ENCODE measurements at regions of chr1 and their contacts with region 1.

Region 1: DNA sequence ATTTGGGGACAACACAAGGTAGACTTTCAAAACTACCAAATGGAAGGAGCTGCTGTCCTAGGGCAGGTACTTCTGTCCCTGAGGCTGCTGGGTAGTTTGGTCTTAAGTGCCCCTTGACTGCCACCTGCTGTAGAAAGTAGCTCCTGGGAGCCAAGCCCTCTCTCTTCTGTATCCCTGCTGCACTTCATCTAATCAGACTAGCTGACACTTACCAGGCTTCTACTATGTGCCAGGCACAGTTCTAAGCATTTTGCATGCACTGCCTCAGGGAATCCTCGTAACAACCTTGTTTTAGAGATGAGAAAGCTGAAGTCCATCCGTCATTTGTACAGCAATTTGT is 15.9 kb upstream of the SRSF4 start:
- DNase-seq: peak; percentile 36
- H3K4me3 ChIP-seq: no peak overlapping the region
- H3K27ac ChIP-seq: no peak overlapping the region
- H3K4me1 ChIP-seq: peaks cover 26% of the 10 kb centered on the region
- H3K27me3 ChIP-seq: no peaks in the 10 kb centered on the region
- CTCF ChIP-seq: peak; percentile 66 to 71

Region 2: GRCh38 chr1:29105839-29106238 is 91.7 kb before region 1 on chr1:
- CTCF ChIA-PET with region 1: no interaction called
- dilution Hi-C with region 1: loop called (anchors 5 kb)
- in situ Hi-C with region 1: no loop called
- intact Hi-C with region 1: no loop called
- DNase-seq: no peak
- H3K4me3 ChIP-seq: no peak overlapping the region
- H3K27ac ChIP-seq: no peak overlapping the region
- H3K4me1 ChIP-seq: no peaks in the 10 kb centered on the region
- H3K27me3 ChIP-seq: no peaks in the 10 kb centered on the region
- CTCF ChIP-seq: no peak

Region 3: DNA sequence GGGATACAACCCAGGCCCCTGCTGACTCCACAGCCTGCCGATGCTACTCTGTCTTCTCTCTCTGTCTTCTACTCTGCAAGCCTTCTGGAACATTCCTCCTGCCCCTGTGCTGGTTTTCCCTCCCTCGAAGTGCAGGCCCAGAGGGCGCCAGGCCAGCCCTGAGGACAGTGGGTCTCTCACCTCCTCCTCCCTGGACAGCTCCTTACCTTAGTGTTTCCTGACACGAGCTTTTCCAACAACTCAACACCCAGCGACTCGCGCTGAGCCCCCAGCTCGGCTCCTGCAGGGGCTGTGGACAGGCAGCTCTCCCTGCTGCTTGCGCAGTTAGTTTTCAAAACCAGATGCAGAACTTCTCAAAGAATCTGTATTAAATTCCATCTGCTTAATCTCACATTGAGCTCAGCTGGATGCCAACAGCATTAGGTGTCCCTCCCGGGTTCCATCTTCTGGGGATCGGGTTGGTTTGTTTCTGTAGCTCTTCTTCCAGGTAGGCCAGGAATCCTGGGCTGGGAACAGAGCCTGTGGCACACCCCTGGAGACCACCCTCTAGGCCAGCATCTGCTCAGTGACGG is 92.9 kb after region 1 on chr1:
- CTCF ChIA-PET with region 1: no interaction called
- dilution Hi-C with region 1: no loop called
- in situ Hi-C with region 1: no loop called
- intact Hi-C with region 1: no loop called
- DNase-seq: no peak
- H3K4me3 ChIP-seq: no peak overlapping the region
- H3K27ac ChIP-seq: no peak overlapping the region
- H3K4me1 ChIP-seq: no peaks in the 10 kb centered on the region
- H3K27me3 ChIP-seq: no peaks in the 10 kb centered on the region
- CTCF ChIP-seq: no peak

Measured in mammary epithelial cell (primary cell).